A673 (cell line): ENCODE measurements at regions of chr5 and their contacts with region 1.

Region 1: DNA sequence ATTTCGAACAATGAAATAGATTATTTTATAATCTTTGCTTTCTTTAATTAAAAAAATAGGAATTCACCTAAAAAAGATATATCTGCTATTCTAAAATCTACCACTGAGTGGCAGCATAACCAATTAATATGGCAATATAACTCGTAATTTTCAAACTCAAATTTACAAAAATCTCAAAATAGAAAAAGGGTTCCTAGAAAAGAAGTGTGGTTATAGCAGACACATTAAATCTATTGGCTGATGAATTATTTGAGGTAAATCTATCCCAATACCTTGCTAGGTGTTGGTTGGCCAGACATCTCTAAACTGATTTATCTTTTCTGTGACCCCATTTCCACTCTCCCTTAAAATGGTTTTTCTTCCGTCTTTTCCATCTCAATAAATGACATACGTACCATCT is 30.2 kb upstream of the NRG2 start:
- DNase-seq: peak; percentile 18
- H3K4me3 ChIP-seq: no peak overlapping the region
- H3K27ac ChIP-seq: no peak overlapping the region
- H3K4me1 ChIP-seq: no peaks in the 10 kb centered on the region
- H3K27me3 ChIP-seq: peaks cover 12% of the 10 kb centered on the region
- CTCF ChIP-seq: peak; percentile 74

Region 2: DNA sequence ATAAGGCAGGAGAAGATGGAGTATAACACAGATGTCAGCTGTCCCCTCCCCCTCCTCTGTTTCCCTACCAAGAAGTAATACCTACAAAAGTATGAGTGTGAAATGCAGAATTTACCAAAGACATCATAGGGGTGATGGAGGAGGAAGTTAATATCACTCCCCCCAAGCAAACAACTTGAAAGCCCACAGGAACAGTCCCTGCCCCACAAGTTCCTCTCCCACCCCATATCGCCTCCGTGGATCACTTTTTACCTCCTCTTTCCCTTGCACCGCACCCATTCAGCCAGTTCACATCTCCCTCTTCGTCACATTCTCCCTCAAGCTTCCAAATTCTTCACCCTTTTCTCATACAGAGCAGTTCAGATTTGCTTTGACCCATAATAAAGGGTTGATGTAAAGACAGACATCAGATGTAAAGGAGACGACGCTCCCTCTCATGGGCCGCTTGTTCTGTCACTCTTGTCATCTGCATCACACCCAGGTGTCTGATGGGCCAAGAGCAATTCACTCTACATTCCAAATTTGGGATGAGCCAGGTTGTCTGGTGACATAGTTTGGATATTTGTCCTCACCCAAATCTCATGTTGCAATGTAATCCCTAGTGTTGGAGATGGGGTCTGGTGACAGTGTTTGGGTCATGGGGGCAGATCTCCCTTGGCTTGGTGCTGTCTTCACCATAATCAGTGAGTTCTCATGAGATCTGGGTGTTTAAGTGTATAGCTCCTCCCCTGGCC is 868.0 kb before region 1 on chr5:
- CTCF ChIA-PET with region 1: interaction called, 11 read pairs
- POLR2A ChIA-PET with region 1: no interaction called
- intact Hi-C with region 1: no loop called
- DNase-seq: no peak
- H3K4me3 ChIP-seq: no peak overlapping the region
- H3K27ac ChIP-seq: no peak overlapping the region
- H3K4me1 ChIP-seq: no peaks in the 10 kb centered on the region
- H3K27me3 ChIP-seq: no peaks in the 10 kb centered on the region
- CTCF ChIP-seq: no peak

Region 3: DNA sequence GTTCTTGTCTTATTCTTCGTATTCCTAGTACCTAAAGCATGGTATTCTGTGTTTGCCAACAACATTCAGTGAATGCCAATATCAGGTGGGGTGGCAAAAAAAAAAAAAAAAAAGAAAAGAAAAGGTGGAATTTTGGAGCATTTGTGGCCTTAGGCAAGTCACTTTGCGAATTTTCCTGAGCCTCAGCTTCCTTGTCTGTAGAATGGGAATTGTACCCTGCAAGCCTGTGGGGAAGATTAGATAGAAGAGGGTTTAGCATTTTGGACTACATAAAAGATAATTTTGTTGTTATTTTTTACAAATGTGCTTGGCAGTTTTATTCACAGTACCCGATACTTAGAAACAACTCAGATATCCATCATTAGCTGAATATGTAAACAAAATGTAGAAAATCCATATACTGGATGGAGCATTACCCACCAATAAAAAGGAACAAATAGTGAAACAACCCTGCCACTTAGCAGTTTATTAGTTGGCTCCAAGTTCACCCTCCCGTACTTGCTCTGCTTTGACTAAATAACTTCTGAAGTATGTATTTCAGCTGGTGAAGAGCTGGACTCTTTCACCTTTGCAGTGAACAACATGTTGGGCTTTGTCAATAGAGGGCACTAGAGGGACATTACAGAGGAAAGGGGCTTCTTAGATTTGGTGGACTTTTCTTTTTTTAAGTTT is 498.5 kb before region 1 on chr5:
- CTCF ChIA-PET with region 1: no interaction called
- POLR2A ChIA-PET with region 1: no interaction called
- intact Hi-C with region 1: no loop called
- DNase-seq: peak; percentile 57
- H3K4me3 ChIP-seq: no peak overlapping the region
- H3K27ac ChIP-seq: no peak overlapping the region
- H3K4me1 ChIP-seq: peaks cover 11% of the 10 kb centered on the region
- H3K27me3 ChIP-seq: no peaks in the 10 kb centered on the region
- CTCF ChIP-seq: peak; percentile 78

Region 4: GRCh38 chr5:140143521-140144258 is 70.4 kb after region 1 on chr5:
- CTCF ChIA-PET with region 1: interaction called, 6 read pairs
- POLR2A ChIA-PET with region 1: no interaction called
- intact Hi-C with region 1: loop called (anchors 1 kb)
- DNase-seq: no peak
- H3K4me3 ChIP-seq: no peak overlapping the region
- H3K27ac ChIP-seq: no peak overlapping the region
- H3K4me1 ChIP-seq: no peaks in the 10 kb centered on the region
- H3K27me3 ChIP-seq: no peaks in the 10 kb centered on the region
- CTCF ChIP-seq: no peak

Region 5: DNA sequence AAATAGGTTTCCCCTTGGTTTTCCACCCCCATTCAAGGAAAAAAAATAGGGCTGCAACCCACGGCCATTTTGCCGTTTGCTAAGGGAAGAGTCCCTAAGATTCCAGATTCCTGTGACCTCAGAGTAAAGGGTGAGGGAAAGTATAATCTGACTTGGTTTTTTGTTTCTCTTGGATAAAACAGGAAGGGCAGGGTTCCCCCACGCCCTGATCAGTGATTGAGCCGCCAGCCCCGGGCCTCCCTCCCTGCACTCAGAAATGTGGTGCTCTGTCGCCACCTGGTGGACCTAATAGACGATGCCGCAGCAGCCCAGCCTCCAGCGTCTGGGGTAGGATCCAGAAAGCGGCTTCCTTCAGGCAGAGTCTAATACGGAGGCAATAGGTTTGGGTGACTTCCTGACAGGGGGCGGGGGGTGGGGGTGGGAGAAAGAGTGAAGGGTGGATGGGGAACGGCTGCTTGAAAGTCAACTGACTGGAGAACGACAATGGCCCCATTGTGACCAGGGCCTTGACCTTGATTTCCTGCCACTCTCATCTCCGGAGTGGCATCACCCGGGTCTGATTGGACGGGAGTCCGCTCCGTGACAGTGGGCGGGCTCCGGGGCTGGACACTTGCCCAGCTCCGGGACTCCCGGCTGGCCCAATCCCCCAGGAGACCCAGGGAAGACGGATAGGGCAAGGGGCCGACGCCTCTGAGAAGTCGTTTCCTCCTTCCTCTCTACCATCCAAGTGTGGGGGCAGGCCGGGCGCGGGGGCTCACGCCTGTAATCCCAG is 83.9 kb after region 1 on chr5:
- CTCF ChIA-PET with region 1: interaction called, 7 read pairs
- POLR2A ChIA-PET with region 1: no interaction called
- intact Hi-C with region 1: loop called (anchors 1 kb)
- DNase-seq: peak; percentile 92
- H3K4me3 ChIP-seq: peak overlapping the region; percentile 33
- H3K27ac ChIP-seq: no peak overlapping the region
- H3K4me1 ChIP-seq: peaks cover 6% of the 10 kb centered on the region
- H3K27me3 ChIP-seq: no peaks in the 10 kb centered on the region
- CTCF ChIP-seq: peak; percentile 95